ENCODE measurements at regions of chr11 and their contacts with region 1.

Region 1: GRCh38 chr11:33039274-33040032 is at the start of gene TCP11L1:
- DNase-seq: peak; percentile 56 to 87 (median 75)
- ATAC-seq: peak; percentile 88 to 91 (median 90)
- H3K4me3 ChIP-seq: peak within 1 kb of the TSS; percentile 83 to 100
- H3K4me3 Mint-ChIP-seq: peak within 1 kb of the TSS; percentile 91 to 95 (median 94)
- H3K27ac ChIP-seq: peak within 1 kb of the TSS; percentile 83
- H3K27ac Mint-ChIP-seq: peak within 1 kb of the TSS; percentile 90 to 96
- H3K4me1 ChIP-seq: peaks cover 0 to 14% of the 10 kb centered on the region in 2 experiments
- H3K4me1 Mint-ChIP-seq: peaks cover 17 to 19% (median 18%) of the 10 kb centered on the region in 3 donors
- H3K27me3 ChIP-seq: peaks cover 0 to 2% of the 10 kb centered on the region in 2 experiments
- H3K27me3 Mint-ChIP-seq: peaks cover 1 to 3% of the 10 kb centered on the region in 2 donors
- total RNA-seq, gene TCP11L1: 12.8 to 20.3 (median 15.1) TPM

Region 2: DNA sequence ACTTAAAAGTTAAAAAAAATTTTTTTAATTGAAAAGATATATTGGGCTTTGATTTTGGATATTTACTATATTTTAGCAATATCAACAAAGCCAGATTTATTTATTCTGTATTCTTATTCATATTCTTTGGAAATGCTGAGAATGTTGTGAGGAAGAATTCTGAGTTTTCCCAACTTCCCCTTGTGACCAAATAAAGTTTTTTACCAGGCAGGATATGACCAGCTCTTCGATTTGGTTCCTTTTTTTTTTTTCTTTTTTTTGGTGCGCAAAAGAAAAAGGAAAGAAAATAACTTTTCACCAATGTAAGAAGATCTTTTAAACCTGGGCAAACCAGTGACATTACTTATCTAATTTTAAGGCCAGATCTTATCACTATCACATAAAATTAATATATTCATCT is 12.8 kb after region 1 on chr11:
- CTCF ChIA-PET with region 1: interaction called, 4 to 15 read pairs
- POLR2A ChIA-PET with region 1: no interaction called
- DNase-seq: no peak
- ATAC-seq: no peak
- H3K4me3 ChIP-seq: no peak overlapping the region
- H3K4me3 Mint-ChIP-seq: no peak overlapping the region
- H3K27ac ChIP-seq: no peak overlapping the region
- H3K27ac Mint-ChIP-seq: no peak overlapping the region
- H3K4me1 ChIP-seq: no peaks in the 10 kb centered on the region
- H3K4me1 Mint-ChIP-seq: no peaks in the 10 kb centered on the region
- H3K27me3 ChIP-seq: no peaks in the 10 kb centered on the region
- H3K27me3 Mint-ChIP-seq: no peaks in the 10 kb centered on the region

Measured in T-cell (primary cell).